HAP-1 (cell line): ENCODE measurements at regions of chr17 and their contacts with region 1.

Region 1: GRCh38 chr17:62109378-62109902 is 44.4 kb upstream of the MED13 start:
- DNase-seq: peak; percentile 81 to 87
- H3K4me3 ChIP-seq: no peak overlapping the region
- H3K4me1 ChIP-seq: peaks cover 15% of the 10 kb centered on the region
- H3K27me3 ChIP-seq: no peaks in the 10 kb centered on the region

Region 2: DNA sequence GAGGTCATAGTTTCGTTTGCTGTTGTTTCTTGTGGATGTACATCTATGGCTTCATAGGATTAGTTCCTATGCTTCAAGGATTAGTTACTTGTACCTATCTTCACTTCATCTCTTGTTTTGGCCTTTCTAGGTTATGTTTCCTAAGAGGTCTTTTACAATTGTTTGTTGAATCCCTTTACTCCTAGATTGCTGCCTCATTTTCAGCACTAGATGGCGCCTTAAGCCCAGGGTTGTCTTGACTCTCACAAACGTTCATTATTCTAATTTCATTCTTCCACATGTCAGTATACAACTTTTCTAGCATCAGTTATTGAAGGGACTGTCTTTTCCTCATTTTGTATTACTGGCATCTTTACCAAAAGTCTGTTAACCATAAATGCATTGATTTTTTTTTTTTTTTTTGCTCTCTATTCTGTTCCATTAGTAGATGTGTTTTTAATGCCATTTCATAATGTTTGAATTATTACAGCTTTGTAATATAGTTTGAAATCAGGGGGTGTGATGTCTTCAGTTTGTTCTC is 473.5 kb before region 1 on chr17:
- in situ Hi-C with region 1: loop called (anchors 10 kb)
- DNase-seq: peak; percentile 68 to 80
- H3K4me3 ChIP-seq: no peak overlapping the region
- H3K4me1 ChIP-seq: no peaks in the 10 kb centered on the region
- H3K27me3 ChIP-seq: no peaks in the 10 kb centered on the region

Region 3: DNA sequence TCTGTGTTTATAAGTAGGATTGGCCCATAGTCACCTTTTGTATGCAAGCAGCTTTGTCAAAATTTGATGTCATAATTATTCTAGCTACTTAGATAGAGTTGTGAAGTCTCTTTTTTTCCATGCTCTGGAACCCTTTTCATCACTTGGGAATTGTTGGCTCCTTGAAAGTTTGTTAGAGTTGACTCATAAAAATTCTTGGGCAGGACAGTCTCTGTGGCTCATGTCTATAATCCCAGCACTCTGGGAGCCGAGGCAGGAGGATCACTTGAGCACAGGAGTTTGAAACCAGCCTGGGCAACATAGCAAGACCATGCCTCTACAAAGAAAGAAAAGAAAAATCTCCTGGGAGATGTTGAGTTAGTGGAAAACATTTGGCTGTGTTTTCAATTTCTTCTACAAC is 472.3 kb after region 1 on chr17:
- in situ Hi-C with region 1: no loop called
- DNase-seq: no peak
- H3K4me3 ChIP-seq: no peak overlapping the region
- H3K4me1 ChIP-seq: no peaks in the 10 kb centered on the region
- H3K27me3 ChIP-seq: no peaks in the 10 kb centered on the region